ENCODE measurements at regions of chr15 and their contacts with region 1.

Region 1: DNA sequence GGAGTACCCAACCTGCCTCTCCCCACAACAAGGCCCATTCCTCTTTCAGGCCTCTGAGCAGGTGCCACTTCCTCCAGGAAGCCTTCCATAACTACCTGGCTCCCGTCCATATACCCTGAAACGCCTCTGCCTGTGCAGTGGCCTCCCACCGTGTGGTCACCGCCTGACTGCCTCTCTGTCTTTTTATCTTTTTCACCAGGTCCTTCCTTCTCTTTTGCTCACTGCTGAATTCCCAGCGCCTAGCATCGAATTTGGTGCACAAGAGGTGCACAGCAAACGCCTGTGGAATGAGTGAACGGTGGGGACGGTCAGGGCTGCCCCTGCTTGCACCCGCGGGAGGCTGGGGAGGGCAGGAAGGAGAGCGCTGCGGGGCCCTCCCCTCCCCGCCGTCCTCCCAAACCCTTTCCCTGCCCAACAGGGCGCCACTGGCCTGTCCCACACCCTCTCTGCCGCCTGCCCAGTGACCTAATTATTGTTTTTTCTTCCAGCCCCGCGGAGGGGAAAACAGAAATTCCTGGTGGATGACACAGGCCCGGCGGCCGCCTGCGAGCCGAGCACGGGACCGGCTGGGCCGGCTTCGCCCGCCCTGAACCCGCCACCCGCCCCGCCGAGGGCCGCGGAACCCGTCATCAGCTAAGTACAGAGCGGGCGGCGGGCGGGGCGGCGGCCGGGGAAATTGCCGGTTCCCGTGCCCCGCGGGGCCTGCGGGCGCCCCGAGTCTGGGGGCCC is 140.1 kb downstream of the SMAD6 start:
- DNase-seq: peak; percentile 87 to 92 (median 92)
- ATAC-seq: peak; percentile 81 to 92 (median 89)
- H3K4me3 ChIP-seq: peak overlapping the region; percentile 14 to 76 (median 57)
- H3K27ac ChIP-seq: peak overlapping the region; percentile 90 to 99 (median 96)
- H3K4me1 ChIP-seq: peaks cover 0 to 49% (median 32%) of the 10 kb centered on the region in 12 donors
- H3K27me3 ChIP-seq: no peaks in the 10 kb centered on the region
- CTCF ChIP-seq: no peak
- POLR2A ChIP-seq: peak in 1 of 2 donors; percentile 36

Region 2: GRCh38 chr15:66803182-66803729 is 38.9 kb before region 1 on chr15:
- intact Hi-C with region 1: loop called in 6 of 10 experiments (anchors 2 to 5 kb)
- DNase-seq: peak; percentile 80 to 94 (median 91)
- ATAC-seq: peak; percentile 89 to 100 (median 98)
- H3K4me3 ChIP-seq: no peak overlapping the region
- H3K27ac ChIP-seq: peak overlapping the region; percentile 50 to 87 (median 78)
- H3K4me1 ChIP-seq: peaks cover 6 to 39% (median 24%) of the 10 kb centered on the region in 12 donors
- H3K27me3 ChIP-seq: no peaks in the 10 kb centered on the region
- CTCF ChIP-seq: no peak
- POLR2A ChIP-seq: peak in 1 of 2 donors; percentile 11

Region 3: GRCh38 chr15:67043939-67044771 is 202.0 kb after region 1 on chr15:
- intact Hi-C with region 1: no loop called
- DNase-seq: no peak
- ATAC-seq: no peak
- H3K4me3 ChIP-seq: no peak overlapping the region
- H3K27ac ChIP-seq: peak overlapping the region in 2 of 12 donors; percentile 5 to 22
- H3K4me1 ChIP-seq: peaks cover 0 to 37% (median 15%) of the 10 kb centered on the region in 12 donors
- H3K27me3 ChIP-seq: no peaks in the 10 kb centered on the region
- CTCF ChIP-seq: no peak
- POLR2A ChIP-seq: no peak

Region 4: DNA sequence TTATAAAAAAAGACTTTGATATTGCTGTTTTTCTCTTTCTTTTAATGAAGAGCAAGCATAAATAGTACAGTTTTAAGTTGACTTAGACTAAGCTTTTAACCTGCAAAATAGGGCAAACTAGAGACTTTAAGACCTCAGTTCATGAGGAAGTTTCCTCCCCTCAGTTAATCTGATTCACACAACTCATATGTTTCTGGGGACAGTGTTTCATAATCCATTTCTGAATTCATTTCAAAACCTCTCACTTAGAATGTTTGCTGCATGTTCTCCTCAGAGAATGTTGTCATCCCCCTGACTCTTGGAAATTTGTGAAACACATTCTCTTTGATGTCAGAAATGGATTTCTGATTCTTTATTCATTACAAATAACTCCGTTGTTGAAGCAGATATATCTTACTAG is 903.9 kb after region 1 on chr15:
- intact Hi-C with region 1: no loop called
- DNase-seq: no peak
- ATAC-seq: no peak
- H3K4me3 ChIP-seq: no peak overlapping the region
- H3K27ac ChIP-seq: no peak overlapping the region
- H3K4me1 ChIP-seq: peaks cover 0 to 32% (median 0%) of the 10 kb centered on the region in 12 donors
- H3K27me3 ChIP-seq: no peaks in the 10 kb centered on the region
- CTCF ChIP-seq: no peak
- POLR2A ChIP-seq: no peak